ENCODE measurements at regions of chr2 and their contacts with region 1.

Region 1: GRCh38 chr2:64750817-64751285 is 97.1 kb upstream of the SERTAD2 start:
- DNase-seq: peak; percentile 99
- ATAC-seq: peak; percentile 81
- H3K4me3 ChIP-seq: peak overlapping the region; percentile 85
- H3K27ac ChIP-seq: peak overlapping the region; percentile 71
- H3K4me1 ChIP-seq: peaks cover 21% of the 10 kb centered on the region
- H3K27me3 ChIP-seq: no peaks in the 10 kb centered on the region
- CTCF ChIP-seq: peak; percentile 19; the same call in 1 of the 2 replicates

Region 2: DNA sequence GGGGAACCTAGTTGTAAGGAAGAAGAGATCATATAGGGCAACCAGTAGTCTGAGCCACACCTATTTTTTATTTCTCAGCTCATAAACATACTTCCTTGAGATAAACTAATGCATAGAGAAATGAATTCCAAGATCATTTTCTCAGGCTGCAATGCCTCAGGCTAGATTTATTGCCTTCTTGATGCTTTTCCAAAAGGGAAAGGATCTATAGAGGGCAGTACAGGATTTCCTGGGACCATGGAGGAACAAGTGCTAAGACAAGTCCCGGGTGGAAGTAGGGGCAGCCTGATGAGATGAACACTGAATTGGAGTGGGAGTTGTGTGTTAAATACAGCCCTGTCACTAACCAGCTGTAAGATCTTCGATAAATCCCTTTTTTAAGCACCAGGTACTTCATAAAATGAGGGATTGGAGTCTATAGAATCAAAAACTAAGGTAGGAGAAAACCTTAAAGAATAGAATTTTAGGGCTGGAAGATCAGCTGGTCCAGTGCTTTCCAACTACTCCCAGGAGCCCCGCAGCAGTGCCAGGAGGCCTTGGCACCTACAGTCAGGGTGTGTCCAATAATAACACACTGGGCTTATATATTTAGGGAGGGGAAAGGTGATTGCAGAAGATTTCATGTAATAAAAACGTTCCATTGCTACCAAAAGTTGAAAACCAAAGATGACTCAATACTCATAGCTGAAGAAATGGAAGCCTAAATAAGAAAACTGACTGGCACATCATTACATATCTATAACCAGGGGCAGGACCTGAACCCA is 155.3 kb before region 1 on chr2:
- CTCF ChIA-PET with region 1: interaction called, 7 read pairs
- POLR2A ChIA-PET with region 1: no interaction called
- intact Hi-C with region 1: loop called (anchors 2 kb)
- DNase-seq: peak; percentile 70
- ATAC-seq: peak; percentile 25
- H3K4me3 ChIP-seq: peak overlapping the region; percentile 5; the same call in 1 of the 2 replicates
- H3K27ac ChIP-seq: peak overlapping the region; percentile 84
- H3K4me1 ChIP-seq: peaks cover 47% of the 10 kb centered on the region
- H3K27me3 ChIP-seq: no peaks in the 10 kb centered on the region
- CTCF ChIP-seq: peak; percentile 55

Region 3: DNA sequence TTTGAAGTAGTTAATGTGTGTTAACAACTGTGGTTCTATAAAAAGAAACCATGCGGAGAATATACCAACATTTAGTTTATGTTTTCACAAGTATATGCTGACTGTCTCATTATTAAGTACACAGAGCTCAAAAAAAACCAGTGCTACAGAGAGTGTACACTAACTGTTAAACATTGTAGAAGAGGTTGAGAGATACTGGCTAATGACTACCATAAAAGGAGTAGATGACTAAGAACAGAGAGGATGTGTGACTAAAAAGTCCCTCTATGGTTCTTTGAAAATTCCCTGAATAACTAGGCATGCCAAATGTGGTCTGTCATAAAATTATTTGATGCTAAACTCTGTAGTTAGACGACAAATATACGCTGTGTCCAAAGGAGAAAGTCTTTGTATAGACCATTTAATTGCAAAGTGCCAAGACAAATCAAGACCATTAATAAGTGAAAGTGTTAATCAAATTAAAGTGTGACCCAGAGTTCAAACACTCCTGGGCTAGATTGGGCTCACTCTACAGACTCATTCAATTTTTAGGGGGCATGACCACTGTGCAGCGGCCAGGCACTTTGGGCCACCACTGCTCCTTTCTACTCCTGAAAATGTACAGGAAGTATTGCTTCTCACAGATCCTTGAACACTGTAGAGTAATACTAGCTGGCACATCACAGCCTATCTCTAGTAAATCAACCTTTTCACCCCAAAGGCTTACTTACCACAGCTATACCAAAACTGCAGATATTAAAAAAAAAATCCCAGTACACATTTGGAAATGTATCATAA is 52.0 kb before region 1 on chr2:
- CTCF ChIA-PET with region 1: interaction called, 4 read pairs
- POLR2A ChIA-PET with region 1: no interaction called
- intact Hi-C with region 1: loop called (anchors 2 kb)
- DNase-seq: peak; percentile 92
- ATAC-seq: peak; percentile 98
- H3K4me3 ChIP-seq: no peak overlapping the region; the same call in 1 of the 2 replicates
- H3K27ac ChIP-seq: peak overlapping the region; percentile 60
- H3K4me1 ChIP-seq: peaks cover 23% of the 10 kb centered on the region
- H3K27me3 ChIP-seq: no peaks in the 10 kb centered on the region
- CTCF ChIP-seq: no peak

Region 4: GRCh38 chr2:64792307-64792706 is 41.5 kb after region 1 on chr2:
- CTCF ChIA-PET with region 1: interaction called, 28 read pairs
- POLR2A ChIA-PET with region 1: interaction called, 4 read pairs
- intact Hi-C with region 1: loop called (anchors 2 kb)
- DNase-seq: peak; percentile 43
- ATAC-seq: peak; percentile 12; the same call in 1 of the 2 replicates
- H3K4me3 ChIP-seq: no peak overlapping the region
- H3K27ac ChIP-seq: peak overlapping the region; percentile 86; the same call in 1 of the 2 replicates
- H3K4me1 ChIP-seq: peaks cover 51% of the 10 kb centered on the region
- H3K27me3 ChIP-seq: no peaks in the 10 kb centered on the region
- CTCF ChIP-seq: peak; percentile 50; the same call in 1 of the 2 replicates

Region 5: GRCh38 chr2:64839844-64840243 is 89.0 kb after region 1 on chr2:
- CTCF ChIA-PET with region 1: interaction called, 6 read pairs
- POLR2A ChIA-PET with region 1: interaction called, 31 read pairs
- intact Hi-C with region 1: loop called (anchors 1 kb)
- DNase-seq: no peak
- ATAC-seq: no peak
- H3K4me3 ChIP-seq: no peak overlapping the region
- H3K27ac ChIP-seq: peak overlapping the region; percentile 86; the same call in 1 of the 2 replicates
- H3K4me1 ChIP-seq: peaks cover 57% of the 10 kb centered on the region
- H3K27me3 ChIP-seq: no peaks in the 10 kb centered on the region
- CTCF ChIP-seq: no peak

Region 6: GRCh38 chr2:64865073-64865830 is 114.4 kb after region 1 on chr2:
- CTCF ChIA-PET with region 1: interaction called, 3 read pairs
- POLR2A ChIA-PET with region 1: interaction called, 4 read pairs
- intact Hi-C with region 1: loop called (anchors 1 kb)
- DNase-seq: peak; percentile 73
- ATAC-seq: peak; percentile 82
- H3K4me3 ChIP-seq: peak overlapping the region; percentile 68
- H3K27ac ChIP-seq: peak overlapping the region; percentile 81
- H3K4me1 ChIP-seq: peaks cover 35% of the 10 kb centered on the region
- H3K27me3 ChIP-seq: no peaks in the 10 kb centered on the region
- CTCF ChIP-seq: peak; percentile 68